MCF 10A (cell line): ENCODE measurements at regions of chr14 and their contacts with region 1.

Region 1: GRCh38 chr14:59507063-59507780 is 22.9 kb downstream of the JKAMP start:
- DNase-seq: peak; percentile 72
- H3K4me3 Mint-ChIP-seq: no peak overlapping the region
- H3K27ac Mint-ChIP-seq: no peak overlapping the region
- H3K4me1 Mint-ChIP-seq: no peaks in the 10 kb centered on the region
- H3K27me3 Mint-ChIP-seq: no peaks in the 10 kb centered on the region
- CTCF ChIP-seq: peak; percentile 81

Region 2: DNA sequence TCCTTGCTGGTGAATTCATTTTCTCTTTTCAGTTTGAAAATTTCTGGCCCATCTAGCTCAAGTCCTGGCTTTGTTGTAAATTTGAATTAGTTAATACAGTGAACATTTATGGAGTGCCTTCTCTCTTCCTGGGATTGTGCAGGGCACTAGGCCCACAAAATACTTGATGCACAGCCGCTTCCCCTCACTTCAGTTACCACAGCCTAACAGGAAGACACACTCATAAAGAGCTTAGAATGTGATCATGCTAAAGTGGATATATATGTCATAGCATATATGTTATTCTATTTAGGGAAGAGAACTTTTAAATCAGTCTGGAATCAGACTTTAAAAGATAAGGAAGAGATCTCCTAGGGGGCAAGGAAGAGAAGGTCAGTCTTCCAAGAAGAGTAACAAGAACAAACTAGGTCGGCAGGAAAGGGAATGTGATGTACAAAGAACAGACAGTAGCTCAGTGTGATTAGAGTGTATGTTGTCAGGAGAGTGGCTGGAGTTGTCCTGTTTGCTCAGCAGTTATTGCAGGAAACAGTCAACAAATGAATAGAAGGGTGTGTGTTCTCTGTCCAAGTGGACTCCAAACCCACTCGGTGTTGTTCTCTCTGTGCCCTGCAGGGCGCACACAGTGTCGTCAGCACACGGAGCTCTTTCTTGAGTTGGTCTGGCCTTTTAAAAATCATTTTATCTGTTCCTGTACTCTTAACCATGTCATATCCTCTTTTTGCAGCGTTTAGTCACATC is 244.3 kb before region 1 on chr14:
- CTCF ChIA-PET with region 1: no interaction called
- POLR2A ChIA-PET with region 1: no interaction called
- intact Hi-C with region 1: no loop called
- DNase-seq: no peak
- H3K4me3 Mint-ChIP-seq: no peak overlapping the region
- H3K27ac Mint-ChIP-seq: no peak overlapping the region
- H3K4me1 Mint-ChIP-seq: peaks cover 6% of the 10 kb centered on the region
- H3K27me3 Mint-ChIP-seq: no peaks in the 10 kb centered on the region
- CTCF ChIP-seq: no peak

Region 3: DNA sequence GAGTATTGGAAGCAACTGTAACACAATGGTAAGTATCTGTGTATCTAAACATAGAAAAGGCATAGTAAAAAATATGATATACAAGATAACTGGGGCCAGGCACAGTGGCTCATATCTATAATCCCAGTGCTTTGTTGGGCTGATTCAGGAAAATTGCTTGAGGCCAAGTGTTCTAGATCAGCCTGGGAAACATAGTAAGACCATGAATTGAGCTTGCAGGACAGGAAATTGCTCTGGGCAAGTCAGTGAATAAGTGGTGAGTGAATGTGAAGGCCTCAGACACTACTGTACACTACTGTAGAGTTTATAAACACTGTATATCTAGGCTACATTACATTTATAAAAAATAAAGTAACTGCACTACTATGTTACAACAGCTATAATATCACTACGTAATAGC is 117.3 kb before region 1 on chr14:
- CTCF ChIA-PET with region 1: no interaction called
- POLR2A ChIA-PET with region 1: no interaction called
- intact Hi-C with region 1: no loop called
- DNase-seq: no peak
- H3K4me3 Mint-ChIP-seq: no peak overlapping the region
- H3K27ac Mint-ChIP-seq: no peak overlapping the region
- H3K4me1 Mint-ChIP-seq: no peaks in the 10 kb centered on the region
- H3K27me3 Mint-ChIP-seq: no peaks in the 10 kb centered on the region
- CTCF ChIP-seq: no peak

Region 4: GRCh38 chr14:59530349-59530748 is 23.1 kb after region 1 on chr14:
- CTCF ChIA-PET with region 1: no interaction called
- POLR2A ChIA-PET with region 1: no interaction called
- intact Hi-C with region 1: no loop called
- DNase-seq: no peak
- H3K4me3 Mint-ChIP-seq: no peak overlapping the region
- H3K27ac Mint-ChIP-seq: no peak overlapping the region
- H3K4me1 Mint-ChIP-seq: no peaks in the 10 kb centered on the region
- H3K27me3 Mint-ChIP-seq: no peaks in the 10 kb centered on the region
- CTCF ChIP-seq: no peak

Region 5: DNA sequence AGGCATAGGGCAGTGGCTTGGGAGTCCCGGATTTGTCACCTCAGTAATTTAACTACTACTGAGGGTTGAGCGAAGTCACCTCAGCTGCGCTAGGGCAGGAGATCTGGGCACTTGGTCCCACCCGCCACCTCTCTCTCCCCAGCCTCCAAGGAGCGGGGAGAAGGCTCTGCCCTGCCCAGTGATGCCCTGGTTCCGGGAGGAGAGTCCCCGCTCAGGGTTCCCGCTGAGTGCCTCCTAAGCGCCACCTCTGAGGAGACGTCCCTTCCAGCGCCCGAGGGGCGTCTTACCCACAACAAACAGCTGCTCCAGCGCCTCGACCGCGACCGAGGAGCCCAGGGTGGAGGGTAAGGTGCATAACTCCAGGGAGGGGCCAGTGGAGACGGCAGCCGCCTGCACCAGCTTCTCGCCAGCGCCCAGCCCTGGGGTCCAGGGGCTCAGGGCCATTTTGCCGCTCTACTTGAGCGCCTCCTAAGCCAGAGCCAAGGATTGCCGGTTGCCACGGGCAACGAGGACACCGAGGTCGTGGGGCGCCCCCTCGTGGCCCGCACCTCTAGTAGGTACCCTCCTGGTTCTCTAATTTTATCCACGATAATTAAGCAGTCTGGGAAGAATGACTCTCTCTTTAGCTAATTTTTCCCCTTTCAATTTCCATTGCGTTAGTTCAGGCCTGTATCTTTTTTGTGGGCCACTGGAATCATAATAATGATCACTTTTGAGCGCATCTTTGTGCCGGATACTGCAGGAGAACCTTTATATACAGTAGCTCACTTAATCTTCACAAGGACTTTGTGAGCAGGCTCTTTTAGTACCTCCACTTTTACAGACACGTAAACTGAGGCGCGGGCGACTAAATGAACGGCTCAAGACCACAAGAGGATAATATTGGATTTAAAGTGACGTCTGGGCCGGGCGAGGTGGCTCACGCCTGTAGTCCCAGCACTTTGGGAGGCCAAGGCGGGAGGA is 69.4 kb after region 1 on chr14 and contains the start of gene CCDC175:
- CTCF ChIA-PET with region 1: no interaction called
- POLR2A ChIA-PET with region 1: no interaction called
- intact Hi-C with region 1: loop called (anchors 10 kb)
- DNase-seq: peak; percentile 52
- H3K4me3 Mint-ChIP-seq: no peak within 1 kb of the TSS
- H3K27ac Mint-ChIP-seq: no peak within 1 kb of the TSS
- H3K4me1 Mint-ChIP-seq: peaks cover 5% of the 10 kb centered on the region
- H3K27me3 Mint-ChIP-seq: no peaks in the 10 kb centered on the region
- CTCF ChIP-seq: peak; percentile 32
- total RNA-seq, gene CCDC175: not detected in 2 replicates

Region 6: DNA sequence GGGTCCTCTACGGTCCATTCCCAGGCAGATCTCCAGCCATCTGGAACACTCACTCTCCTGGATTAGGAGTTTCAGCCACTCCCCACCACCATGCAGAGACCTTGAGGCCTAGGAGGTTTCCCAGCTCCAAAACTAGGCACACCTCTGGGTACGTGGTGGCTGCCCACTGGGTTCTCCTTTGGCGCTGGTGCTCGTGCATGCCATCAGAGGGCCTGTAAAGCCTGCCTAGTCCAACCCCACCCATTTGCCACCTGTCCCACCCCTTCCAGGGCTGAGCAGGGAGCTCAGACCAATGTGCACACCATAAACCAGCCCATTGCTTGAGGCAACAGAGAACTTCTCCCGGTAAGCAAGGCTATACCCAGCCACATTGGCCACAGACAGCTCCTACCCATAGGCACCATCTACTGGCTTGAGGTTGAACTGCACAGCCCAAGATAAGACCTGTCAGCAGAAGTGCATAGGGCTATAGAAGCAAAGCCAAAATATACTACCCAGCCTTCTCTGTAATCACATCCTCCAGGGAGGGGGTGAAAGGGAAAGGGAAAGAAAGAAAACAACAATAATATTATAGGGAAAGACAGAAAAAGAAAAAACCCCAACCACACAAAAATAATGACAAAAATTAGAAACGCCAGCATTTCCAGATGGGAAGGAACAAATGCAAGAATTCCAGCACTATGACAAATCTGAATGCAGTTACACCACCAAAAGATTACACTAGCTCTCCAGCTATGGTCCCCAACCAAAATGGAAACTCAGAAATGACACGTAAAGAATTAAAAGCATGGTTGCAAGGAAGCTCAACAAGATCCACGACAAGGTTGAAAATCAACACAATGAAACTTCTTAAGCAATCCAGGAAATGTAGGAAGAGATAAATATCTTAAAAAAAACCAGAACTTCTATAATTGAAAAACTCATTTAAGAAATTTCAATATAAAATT is 181.3 kb after region 1 on chr14:
- CTCF ChIA-PET with region 1: interaction called, 6 read pairs
- POLR2A ChIA-PET with region 1: no interaction called
- intact Hi-C with region 1: loop called (anchors 10 kb)
- DNase-seq: peak; percentile 62
- H3K4me3 Mint-ChIP-seq: peak overlapping the region; percentile 60
- H3K27ac Mint-ChIP-seq: peak overlapping the region; percentile 98
- H3K4me1 Mint-ChIP-seq: peaks cover 60% of the 10 kb centered on the region
- H3K27me3 Mint-ChIP-seq: no peaks in the 10 kb centered on the region
- CTCF ChIP-seq: peak; percentile 26

Region 7: DNA sequence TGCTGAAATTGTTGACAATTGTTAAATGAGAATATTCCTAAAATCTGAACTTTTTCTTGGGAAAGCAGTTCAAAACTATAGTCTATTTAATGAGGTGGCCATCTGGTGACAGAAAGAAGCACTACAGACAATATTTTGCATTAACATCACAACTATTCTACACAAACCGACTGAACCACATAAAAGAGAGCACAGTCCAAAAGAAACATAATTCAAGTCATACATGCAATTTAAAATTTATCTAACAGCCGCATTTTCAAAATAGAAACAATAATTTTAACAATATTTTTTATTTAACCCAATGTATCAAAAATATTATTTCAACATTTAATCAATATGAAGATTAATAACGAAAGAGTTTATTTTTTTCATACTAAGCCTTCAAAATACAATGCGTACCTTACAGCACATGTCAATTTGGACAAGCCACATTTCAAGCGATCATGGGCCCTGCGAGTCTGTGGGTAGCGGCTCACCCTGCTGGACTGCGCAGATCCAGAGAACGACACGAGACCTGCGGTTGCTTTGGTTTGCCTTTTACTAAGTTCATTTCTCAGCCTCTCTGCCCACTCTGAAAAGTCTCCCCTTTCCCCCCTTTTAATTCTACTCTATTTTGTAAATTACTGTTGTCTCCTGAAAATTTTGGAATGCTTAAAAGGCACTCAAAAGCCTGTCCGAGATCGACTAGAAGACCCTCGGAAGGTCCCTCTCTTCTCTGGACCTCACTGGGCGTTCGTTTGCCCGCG is 411.8 kb after region 1 on chr14:
- CTCF ChIA-PET with region 1: interaction called, 11 read pairs
- POLR2A ChIA-PET with region 1: no interaction called
- intact Hi-C with region 1: loop called (anchors 1 kb)
- DNase-seq: peak; percentile 34
- H3K4me3 Mint-ChIP-seq: no peak overlapping the region
- H3K27ac Mint-ChIP-seq: no peak overlapping the region
- H3K4me1 Mint-ChIP-seq: no peaks in the 10 kb centered on the region
- H3K27me3 Mint-ChIP-seq: no peaks in the 10 kb centered on the region
- CTCF ChIP-seq: peak; percentile 34

Region 8: DNA sequence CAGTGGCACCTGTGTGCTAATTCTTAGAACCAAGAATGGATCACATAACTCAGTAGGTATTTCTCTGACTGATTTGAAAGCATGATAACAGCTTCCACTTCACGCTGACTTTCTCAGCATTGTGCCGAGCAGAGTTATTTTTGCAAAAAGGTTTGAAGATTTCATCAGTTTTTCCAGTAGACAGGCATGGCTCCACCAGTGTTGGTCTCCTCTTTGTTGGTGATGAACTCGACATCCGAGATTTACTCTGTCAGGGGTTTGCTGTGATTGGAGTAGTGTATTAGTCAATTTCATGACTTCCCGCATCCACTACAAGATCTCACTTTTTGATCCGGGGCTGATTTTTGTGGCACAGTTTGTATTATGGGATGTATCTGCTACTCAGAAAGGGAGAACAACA is 1899.5 kb after region 1 on chr14:
- CTCF ChIA-PET with region 1: no interaction called
- POLR2A ChIA-PET with region 1: no interaction called
- intact Hi-C with region 1: no loop called
- DNase-seq: no peak
- H3K4me3 Mint-ChIP-seq: no peak overlapping the region
- H3K27ac Mint-ChIP-seq: no peak overlapping the region
- H3K4me1 Mint-ChIP-seq: no peaks in the 10 kb centered on the region
- H3K27me3 Mint-ChIP-seq: no peaks in the 10 kb centered on the region
- CTCF ChIP-seq: no peak